ENCODE measurements at regions of chr10 and their contacts with region 1.

Region 1: DNA sequence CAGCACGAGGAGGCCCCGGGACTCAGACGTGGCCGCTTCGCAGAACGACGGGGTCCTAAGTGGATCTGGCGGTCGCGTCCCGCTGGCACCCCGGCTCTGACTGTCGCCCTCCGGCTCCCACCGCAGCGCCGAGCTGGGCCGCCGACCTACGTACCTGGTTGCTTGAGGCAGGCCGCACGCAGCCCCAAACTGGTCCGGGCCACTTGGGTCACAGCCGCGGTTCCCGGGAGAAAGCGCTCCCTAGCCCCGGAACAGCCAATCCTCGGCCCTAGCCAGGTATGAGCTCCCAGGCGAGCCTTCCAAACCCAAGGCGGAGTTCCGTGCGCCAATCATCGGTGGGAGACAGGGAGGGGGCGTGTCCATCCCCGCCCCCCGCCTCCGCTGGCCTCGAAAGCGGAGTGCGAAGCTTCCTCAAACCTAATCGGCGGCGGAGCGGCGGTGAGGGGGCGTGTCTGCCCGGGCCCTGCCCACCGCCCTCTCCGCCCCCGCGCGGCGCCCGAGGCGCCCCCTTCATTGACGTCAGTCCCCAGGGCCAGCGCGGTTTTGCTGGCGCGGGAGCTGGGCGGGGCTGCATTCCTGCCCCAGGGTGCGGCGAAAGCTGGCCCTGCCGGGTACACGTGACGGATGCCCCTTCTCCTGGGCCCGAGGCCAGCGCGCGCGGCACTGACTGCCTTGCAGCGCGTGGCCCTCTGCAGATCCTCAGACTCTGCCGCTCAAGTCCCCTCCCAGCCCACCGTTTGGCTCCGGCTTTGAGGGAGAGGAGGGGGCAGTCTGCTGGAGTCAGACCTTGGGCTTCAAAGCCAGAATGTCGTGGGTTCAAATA is at the start of gene AVPI1:
- DNase-seq: peak; percentile 98
- ATAC-seq: peak; percentile 91
- H3K4me3 Mint-ChIP-seq: peak within 1 kb of the TSS; percentile 86
- H3K27ac Mint-ChIP-seq: peak within 1 kb of the TSS; percentile 92
- H3K4me1 Mint-ChIP-seq: peaks cover 32% of the 10 kb centered on the region
- H3K27me3 Mint-ChIP-seq: peaks cover 17% of the 10 kb centered on the region
- CTCF ChIP-seq: no peak
- total RNA-seq, gene AVPI1: 8.1 to 9.8 TPM (median 9.0 TPM) in 3 replicates

Region 2: GRCh38 chr10:97553575-97554031 is 133.6 kb before region 1 on chr10:
- CTCF ChIA-PET with region 1: no interaction called
- POLR2A ChIA-PET with region 1: no interaction called
- DNase-seq: peak; percentile 81
- ATAC-seq: peak; percentile 91
- H3K4me3 Mint-ChIP-seq: peak overlapping the region; percentile 25; the same call in 1 of the 2 replicates
- H3K27ac Mint-ChIP-seq: peak overlapping the region; percentile 96
- H3K4me1 Mint-ChIP-seq: peaks cover 37% of the 10 kb centered on the region
- H3K27me3 Mint-ChIP-seq: no peaks in the 10 kb centered on the region
- CTCF ChIP-seq: no peak

Region 3: DNA sequence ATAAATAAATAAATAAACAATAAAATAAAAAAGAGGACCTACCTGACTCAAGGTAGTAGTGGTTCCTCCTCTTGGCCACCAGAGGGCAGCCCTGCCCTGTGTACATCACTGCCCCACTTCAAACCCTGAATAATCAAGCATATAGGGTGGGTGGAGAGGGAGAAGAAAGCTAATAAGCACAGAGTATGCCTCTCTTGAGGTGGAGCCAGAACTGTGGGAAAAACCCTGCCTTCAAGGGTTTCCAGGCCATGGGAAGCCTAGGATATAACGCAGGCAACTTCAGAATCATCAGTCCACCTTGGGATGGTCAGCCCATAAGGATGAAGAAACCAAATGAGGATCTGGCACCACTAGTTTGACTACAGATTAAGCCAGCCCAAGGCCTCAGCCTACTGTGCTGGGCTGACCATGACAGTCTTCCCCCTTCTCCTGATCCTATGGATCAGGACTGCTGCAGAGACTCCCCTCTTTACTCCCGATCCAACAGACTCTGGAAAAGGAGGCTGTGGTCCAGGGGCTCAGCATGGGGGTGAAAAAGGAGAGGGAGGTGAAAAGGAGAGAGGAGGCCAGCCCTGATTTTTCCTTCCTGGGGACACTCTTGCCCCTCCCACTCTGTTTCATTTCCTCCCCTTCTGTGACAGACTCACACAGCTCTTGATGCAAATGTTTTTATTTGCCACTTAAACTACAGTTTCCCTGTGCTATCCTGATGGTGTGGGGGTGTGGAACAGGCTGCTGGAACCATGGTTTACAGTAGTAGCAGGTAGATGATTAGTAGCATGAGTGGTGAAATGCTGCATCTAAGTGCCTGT is 10.2 kb before region 1 on chr10:
- CTCF ChIA-PET with region 1: interaction called, 61 read pairs
- POLR2A ChIA-PET with region 1: interaction called, 6 read pairs
- DNase-seq: peak; percentile 48
- ATAC-seq: peak; percentile 93
- H3K4me3 Mint-ChIP-seq: no peak overlapping the region
- H3K27ac Mint-ChIP-seq: no peak overlapping the region
- H3K4me1 Mint-ChIP-seq: no peaks in the 10 kb centered on the region
- H3K27me3 Mint-ChIP-seq: no peaks in the 10 kb centered on the region
- CTCF ChIP-seq: peak; percentile 87

Region 4: DNA sequence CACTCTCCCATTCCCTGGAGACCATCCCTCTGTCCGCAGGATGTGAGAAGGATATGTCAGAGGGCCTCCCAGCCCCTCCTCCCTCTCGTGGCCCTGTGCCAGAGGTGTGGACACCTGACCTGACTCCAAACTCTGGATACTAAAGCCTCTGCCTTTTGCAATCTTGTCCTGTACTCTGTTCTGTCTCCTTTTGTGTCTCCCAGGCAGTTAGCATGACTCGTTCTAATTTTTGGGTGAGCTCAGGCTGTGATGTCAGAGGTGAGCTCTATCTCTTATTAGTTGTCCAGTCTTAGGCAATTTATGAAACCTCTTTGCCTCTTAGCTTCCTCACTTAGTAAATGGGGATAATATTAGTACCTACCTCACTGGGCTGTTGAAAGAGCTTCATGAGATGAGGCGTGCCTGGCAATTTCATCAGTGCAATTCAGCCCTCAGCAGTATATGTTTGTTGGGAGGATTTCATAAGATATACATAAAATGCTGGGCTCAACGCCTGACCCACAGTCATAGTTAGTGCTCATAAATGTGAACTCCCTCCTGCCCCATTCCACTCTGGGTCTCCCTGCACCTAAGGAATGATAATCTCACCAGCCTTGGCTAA is 37.3 kb after region 1 on chr10:
- CTCF ChIA-PET with region 1: interaction called, 18 read pairs
- POLR2A ChIA-PET with region 1: interaction called, 9 read pairs
- DNase-seq: no peak
- ATAC-seq: no peak
- H3K4me3 Mint-ChIP-seq: no peak overlapping the region
- H3K27ac Mint-ChIP-seq: no peak overlapping the region
- H3K4me1 Mint-ChIP-seq: peaks cover 15% of the 10 kb centered on the region
- H3K27me3 Mint-ChIP-seq: no peaks in the 10 kb centered on the region; the same call in 1 of the 2 replicates
- CTCF ChIP-seq: no peak

Region 5: DNA sequence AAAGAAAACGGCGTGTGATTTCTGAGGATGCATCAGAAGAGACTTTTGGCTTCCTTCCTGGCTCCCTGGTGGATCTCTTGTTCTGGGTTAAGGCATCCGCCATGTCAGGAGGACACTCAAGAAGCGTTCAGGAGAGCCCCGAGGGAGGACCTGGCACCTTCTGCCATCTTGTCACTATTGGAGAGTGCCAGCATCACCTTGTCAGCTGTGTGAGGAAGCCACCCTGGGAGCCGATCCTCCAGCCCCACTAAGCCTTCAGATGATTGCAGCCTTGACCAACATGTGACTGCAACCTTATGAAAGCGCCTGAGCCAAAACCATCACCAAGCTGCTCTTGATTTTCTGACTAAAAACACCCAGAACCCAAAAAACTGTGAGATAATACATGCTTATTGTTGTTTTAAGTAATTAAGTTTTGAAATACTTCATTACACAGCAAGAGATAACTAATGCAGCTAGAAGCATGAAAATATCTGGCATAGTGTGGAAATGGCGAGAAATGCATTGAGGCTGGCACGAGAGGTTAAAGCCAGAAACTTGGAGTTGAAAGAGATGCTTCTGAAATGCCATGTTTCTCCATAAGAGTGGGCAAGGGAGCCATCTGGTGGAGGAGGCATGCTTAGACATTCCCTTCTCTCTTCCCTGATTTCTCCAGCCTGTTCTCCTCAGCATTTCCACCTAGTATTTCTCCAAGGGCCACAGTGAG is 44.3 kb after region 1 on chr10:
- CTCF ChIA-PET with region 1: interaction called, 18 read pairs
- POLR2A ChIA-PET with region 1: interaction called, 17 read pairs
- DNase-seq: peak; percentile 71
- ATAC-seq: peak; percentile 88
- H3K4me3 Mint-ChIP-seq: no peak overlapping the region
- H3K27ac Mint-ChIP-seq: no peak overlapping the region
- H3K4me1 Mint-ChIP-seq: peaks cover 5% of the 10 kb centered on the region
- H3K27me3 Mint-ChIP-seq: peaks cover 33% of the 10 kb centered on the region
- CTCF ChIP-seq: peak; percentile 56

Region 6: GRCh38 chr10:97736902-97737769 is 50.0 kb after region 1 on chr10 and contains the start of gene ZFYVE27:
- CTCF ChIA-PET with region 1: interaction called, 5 read pairs
- POLR2A ChIA-PET with region 1: interaction called, 17 read pairs
- DNase-seq: peak; percentile 98
- ATAC-seq: peak; percentile 92
- H3K4me3 Mint-ChIP-seq: peak within 1 kb of the TSS; percentile 87
- H3K27ac Mint-ChIP-seq: peak within 1 kb of the TSS; percentile 90
- H3K4me1 Mint-ChIP-seq: peaks cover 10% of the 10 kb centered on the region
- H3K27me3 Mint-ChIP-seq: peaks cover 34% of the 10 kb centered on the region
- CTCF ChIP-seq: no peak
- total RNA-seq, gene ZFYVE27: 23.2 to 26.9 TPM (median 26.0 TPM) in 3 replicates